ENCODE measurements at regions of chr10 and their contacts with region 1.

Region 1: DNA sequence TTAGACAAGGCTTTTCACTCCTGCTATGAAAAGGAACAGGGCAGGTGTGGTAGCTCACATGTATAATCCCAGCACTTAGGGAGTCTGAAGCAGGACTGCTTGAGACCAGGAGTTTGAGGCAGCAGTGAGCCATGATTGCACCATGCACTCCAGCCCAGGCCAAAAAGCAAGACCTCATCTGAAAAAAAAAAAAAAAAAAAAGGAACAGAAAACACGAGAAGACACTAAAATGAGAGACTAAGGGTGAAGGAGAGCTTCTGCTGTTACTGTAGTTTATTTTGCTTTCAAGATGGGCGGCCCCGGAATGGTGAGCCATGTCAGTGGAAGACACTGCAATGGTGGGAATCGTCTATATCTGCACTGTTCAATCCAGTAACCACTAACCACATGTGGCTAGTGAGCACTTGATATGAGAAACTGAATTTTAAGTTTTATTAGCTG is 9.9 kb downstream of the PIP4K2A start:
- DNase-seq: no peak
- H3K4me3 ChIP-seq: no peak overlapping the region
- H3K27ac ChIP-seq: no peak overlapping the region
- H3K4me1 ChIP-seq: no peaks in the 10 kb centered on the region
- H3K27me3 ChIP-seq: no peaks in the 10 kb centered on the region
- CTCF ChIP-seq: no peak

Region 2: GRCh38 chr10:22475651-22476600 is 228.6 kb before region 1 on chr10:
- CTCF ChIA-PET with region 1: no interaction called
- POLR2A ChIA-PET with region 1: no interaction called
- intact Hi-C with region 1: no loop called
- DNase-seq: peak; percentile 43
- H3K4me3 ChIP-seq: peak overlapping the region; percentile 43
- H3K27ac ChIP-seq: no peak overlapping the region
- H3K4me1 ChIP-seq: peaks cover 7% of the 10 kb centered on the region
- H3K27me3 ChIP-seq: peaks cover 35% of the 10 kb centered on the region
- CTCF ChIP-seq: no peak

Region 3: DNA sequence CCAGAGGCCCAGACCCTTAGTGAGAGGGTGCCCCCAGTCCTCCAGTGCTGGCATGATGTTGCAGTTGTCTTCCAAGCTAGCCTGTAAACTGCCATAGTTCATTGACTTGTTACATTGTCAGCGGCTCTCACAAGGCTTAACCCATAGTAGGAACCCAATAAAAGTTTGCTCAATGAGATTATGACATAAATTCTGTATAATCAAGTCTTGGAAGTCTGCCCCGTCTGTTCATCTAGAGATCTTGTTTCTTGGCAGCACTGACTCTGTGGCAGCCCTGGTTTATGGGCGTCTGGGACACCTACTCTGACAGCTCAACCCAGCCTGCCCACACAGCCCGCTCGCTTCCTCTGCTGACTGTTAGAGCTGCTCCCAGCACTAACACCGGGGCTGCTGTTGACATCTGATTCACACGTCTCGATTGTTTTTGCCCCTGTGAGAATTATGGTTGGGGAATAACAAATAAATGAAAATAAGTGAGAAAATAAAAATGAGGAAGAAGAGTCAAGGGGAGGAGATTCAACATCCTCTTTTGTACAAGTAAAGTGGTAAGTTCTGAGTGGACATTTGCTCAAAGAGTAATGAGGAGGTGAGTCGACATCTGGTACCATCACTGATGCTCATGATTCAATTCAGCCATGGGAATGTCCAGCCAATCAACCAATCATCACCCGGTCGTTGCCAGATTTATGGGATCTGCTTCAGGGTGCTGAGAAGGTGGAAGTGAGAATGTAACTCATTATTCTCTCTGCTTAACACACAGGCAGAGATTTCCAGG is 198.4 kb before region 1 on chr10:
- CTCF ChIA-PET with region 1: no interaction called
- POLR2A ChIA-PET with region 1: no interaction called
- intact Hi-C with region 1: no loop called
- DNase-seq: peak; percentile 85
- H3K4me3 ChIP-seq: no peak overlapping the region
- H3K27ac ChIP-seq: no peak overlapping the region
- H3K4me1 ChIP-seq: peaks cover 9% of the 10 kb centered on the region
- H3K27me3 ChIP-seq: peaks cover 7% of the 10 kb centered on the region
- CTCF ChIP-seq: no peak

Region 4: DNA sequence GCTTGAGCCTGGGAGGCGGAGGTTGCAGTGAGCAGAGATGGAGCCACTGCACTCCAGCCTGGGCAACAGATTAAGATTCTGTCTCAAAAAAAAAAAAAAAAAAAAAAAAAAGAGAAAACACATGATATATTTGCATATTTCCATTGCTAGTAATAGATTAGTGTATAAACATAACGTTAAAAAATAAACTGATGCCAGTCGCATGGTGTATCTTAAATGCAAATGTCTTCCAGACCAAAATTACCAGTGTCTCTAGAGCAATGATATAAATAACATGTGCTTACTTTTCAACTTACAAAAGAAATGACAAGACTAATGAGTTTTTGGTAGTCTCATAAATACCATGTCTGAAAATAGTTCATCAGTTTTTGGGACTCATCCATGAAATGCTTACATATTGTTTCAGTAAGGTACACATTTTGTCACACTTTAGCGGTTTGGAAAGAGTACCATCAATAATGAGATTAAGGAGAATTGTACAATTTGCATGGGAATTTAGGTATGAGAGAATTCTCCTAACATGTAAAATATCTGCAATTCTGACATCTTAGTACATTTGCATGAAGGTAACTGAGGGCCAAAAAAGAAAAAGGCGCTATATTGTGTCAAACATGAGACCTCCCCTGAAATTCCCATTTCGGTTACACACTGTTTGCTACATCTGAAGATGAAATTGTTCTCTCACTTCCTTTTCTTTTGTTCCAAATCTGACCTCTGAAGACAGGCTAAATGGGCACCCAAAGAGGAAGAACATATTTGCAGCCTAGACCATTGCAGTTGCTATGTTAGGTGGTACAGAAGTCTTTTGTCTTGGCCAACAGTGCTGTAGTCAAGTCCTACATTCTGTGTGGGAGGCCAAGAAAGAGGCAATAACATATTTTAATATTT is 61.4 kb after region 1 on chr10:
- CTCF ChIA-PET with region 1: no interaction called
- POLR2A ChIA-PET with region 1: no interaction called
- intact Hi-C with region 1: loop called (anchors 10 kb)
- DNase-seq: no peak
- H3K4me3 ChIP-seq: no peak overlapping the region
- H3K27ac ChIP-seq: no peak overlapping the region
- H3K4me1 ChIP-seq: no peaks in the 10 kb centered on the region
- H3K27me3 ChIP-seq: no peaks in the 10 kb centered on the region
- CTCF ChIP-seq: no peak

Region 5: GRCh38 chr10:23877791-23878320 is 1173.4 kb after region 1 on chr10:
- CTCF ChIA-PET with region 1: no interaction called
- POLR2A ChIA-PET with region 1: no interaction called
- intact Hi-C with region 1: no loop called
- DNase-seq: no peak
- H3K4me3 ChIP-seq: no peak overlapping the region
- H3K27ac ChIP-seq: no peak overlapping the region
- H3K4me1 ChIP-seq: no peaks in the 10 kb centered on the region
- H3K27me3 ChIP-seq: peaks cover 11% of the 10 kb centered on the region
- CTCF ChIP-seq: no peak